Mucosa of descending colon (tissue), 3 donors: ENCODE measurements at regions of chr6 and their contacts with region 1.

Region 1: DNA sequence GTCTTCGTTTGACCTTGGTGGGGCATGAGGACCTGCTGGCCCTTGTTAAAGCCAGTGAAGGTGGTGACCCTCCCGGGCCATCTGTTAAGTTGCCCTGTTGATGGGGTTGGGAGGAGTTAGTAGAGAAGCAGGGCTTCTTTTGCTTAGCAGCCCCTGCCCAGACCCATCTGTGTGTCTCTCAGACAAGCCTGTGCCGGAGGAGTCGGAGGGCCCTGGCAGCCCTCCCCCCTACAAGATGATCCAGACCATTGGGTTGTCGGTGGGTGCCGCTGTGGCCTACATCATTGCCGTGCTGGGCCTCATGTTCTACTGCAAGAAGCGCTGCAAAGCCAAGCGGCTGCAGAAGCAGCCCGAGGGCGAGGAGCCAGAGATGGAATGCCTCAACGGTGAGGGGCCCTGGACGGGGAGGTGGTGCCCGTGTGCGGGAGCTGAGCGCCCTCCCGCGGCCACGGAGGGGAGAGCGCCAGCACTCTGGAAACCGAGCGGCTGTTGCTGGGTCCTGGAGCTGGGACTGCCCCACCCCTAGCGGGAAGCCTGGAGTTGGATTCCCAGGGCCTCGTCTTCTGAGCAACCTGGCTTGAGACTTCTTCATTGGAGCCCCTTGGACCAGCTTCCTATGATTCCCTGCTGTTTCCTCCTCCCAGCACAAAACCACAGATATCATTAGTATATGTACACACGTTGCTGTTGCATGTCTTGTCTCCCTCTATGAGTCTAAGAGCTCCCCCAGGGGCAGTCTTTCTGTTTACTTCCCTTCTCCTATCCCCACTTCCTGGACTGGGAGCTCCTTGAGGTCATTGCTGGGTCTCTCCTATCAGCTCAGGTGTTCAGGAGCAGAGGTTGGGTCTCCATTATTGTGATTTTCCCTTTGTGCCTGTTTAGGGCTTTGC is 27.6 kb upstream of the SRF start:
- DNase-seq: peak; percentile 82 to 89 (median 86)
- ATAC-seq: peak; percentile 99
- H3K4me3 ChIP-seq: no peak overlapping the region
- H3K4me1 ChIP-seq: peaks cover 8% of the 10 kb centered on the region
- CTCF ChIP-seq: peak; percentile 93

Region 2: DNA sequence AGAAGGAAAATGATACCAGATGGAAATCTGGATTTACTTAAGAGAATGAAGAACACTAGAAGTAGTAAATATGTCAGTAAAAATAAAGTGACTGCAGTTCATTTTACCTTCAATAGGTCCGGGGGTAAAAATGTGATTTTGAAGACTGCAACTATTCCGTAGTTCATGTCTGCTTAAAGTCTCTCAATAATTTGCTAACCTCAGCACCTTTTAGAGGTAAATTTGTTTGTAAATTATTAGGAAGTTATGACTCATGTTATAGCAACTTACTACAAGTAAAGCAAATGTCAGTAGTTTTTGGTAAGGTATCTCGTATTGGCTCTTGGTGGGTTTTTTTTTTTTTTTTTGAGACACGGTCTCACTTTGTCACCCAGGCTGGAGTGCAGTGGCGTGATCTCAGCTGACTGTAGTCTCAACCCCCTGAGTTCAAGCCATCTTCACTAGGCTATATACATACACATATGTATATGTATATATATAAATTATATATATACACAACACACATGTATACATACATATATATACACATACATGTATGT is 329.5 kb before region 1 on chr6:
- intact Hi-C with region 1: no loop called
- DNase-seq: no peak
- ATAC-seq: no peak
- H3K4me3 ChIP-seq: no peak overlapping the region
- H3K4me1 ChIP-seq: no peaks in the 10 kb centered on the region
- CTCF ChIP-seq: no peak

Region 3: GRCh38 chr6:42901536-42901957 is 241.9 kb before region 1 on chr6:
- intact Hi-C with region 1: loop called (anchors 5 to 10 kb)
- DNase-seq: peak; percentile 59 to 85 (median 66)
- ATAC-seq: peak; percentile 99
- H3K4me3 ChIP-seq: no peak overlapping the region
- H3K4me1 ChIP-seq: no peaks in the 10 kb centered on the region
- CTCF ChIP-seq: peak; percentile 65

Region 4: GRCh38 chr6:43383021-43383667 is 239.7 kb after region 1 on chr6:
- intact Hi-C with region 1: no loop called
- DNase-seq: no peak
- ATAC-seq: no peak
- H3K4me3 ChIP-seq: no peak overlapping the region
- H3K4me1 ChIP-seq: no peaks in the 10 kb centered on the region
- CTCF ChIP-seq: no peak